ENCODE measurements at regions of chr3 and their contacts with region 1.

Region 1: DNA sequence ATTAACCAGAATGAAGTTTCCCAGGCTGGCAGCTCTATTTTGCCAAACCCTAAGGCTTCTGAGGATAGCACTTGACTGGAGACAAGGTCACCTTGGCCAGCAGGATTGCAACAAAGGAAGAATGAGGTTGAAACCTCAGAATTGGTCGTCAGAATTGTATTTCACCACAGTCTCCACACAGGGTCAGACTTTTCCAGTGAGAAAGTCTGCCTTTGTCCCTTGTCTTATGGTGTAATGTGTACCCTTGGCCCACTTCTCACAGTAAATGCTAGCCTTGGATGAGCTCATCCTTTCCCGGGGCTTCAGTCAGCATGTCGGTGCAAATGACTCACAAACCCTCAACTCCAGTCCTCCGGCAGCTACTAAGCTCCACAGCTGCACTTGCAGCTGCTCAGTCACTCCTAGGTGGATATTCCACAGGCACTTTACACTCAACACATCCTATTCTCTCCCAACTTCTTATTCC is 19.7 kb downstream of the SSR3 start:
- DNase-seq: peak; percentile 76
- H3K4me3 Mint-ChIP-seq: peak overlapping the region; percentile 3
- H3K27ac Mint-ChIP-seq: peak overlapping the region; percentile 35
- H3K4me1 Mint-ChIP-seq: peaks cover 22% of the 10 kb centered on the region
- H3K27me3 Mint-ChIP-seq: no peaks in the 10 kb centered on the region
- CTCF ChIP-seq: no peak

Region 2: GRCh38 chr3:155805204-155805801 is 729.9 kb before region 1 on chr3:
- CTCF ChIA-PET with region 1: no interaction called
- intact Hi-C with region 1: no loop called
- DNase-seq: peak; percentile 69
- H3K4me3 Mint-ChIP-seq: peak overlapping the region; percentile 93
- H3K27ac Mint-ChIP-seq: peak overlapping the region; percentile 78
- H3K4me1 Mint-ChIP-seq: peaks cover 14% of the 10 kb centered on the region
- H3K27me3 Mint-ChIP-seq: peaks cover 7% of the 10 kb centered on the region
- CTCF ChIP-seq: no peak

Region 3: DNA sequence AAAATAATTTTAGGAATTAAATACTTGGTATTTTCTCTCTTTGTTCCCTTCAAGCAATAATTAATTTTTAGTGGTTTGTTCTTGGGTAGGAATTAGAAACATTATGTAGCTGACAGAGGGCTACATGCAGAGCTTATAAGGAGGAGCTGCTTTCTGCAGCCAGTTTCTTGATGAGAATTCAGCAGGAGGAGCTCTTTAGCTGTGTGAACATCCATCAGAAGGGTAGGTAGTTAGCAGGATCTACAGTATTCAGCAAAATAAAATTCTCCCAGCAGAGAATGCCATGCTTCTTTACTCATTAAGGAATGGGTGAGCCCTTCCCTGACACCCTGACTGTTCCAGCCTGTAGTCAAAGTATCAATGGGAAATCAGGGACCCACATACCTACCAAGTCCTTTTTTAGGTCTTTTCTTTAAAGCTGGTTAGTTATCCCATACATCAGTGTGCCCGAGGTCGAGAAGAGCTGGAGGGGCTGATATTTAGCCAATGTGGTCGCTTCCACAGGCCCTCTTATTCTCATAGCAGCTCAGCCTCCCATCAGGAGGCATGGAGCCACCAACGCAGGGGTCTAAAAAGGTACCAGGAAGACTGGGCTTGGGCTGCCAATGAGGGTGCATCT is 360.9 kb before region 1 on chr3:
- CTCF ChIA-PET with region 1: no interaction called
- intact Hi-C with region 1: no loop called
- DNase-seq: no peak
- H3K4me3 Mint-ChIP-seq: no peak overlapping the region
- H3K27ac Mint-ChIP-seq: no peak overlapping the region
- H3K4me1 Mint-ChIP-seq: no peaks in the 10 kb centered on the region
- H3K27me3 Mint-ChIP-seq: peaks cover 66% of the 10 kb centered on the region
- CTCF ChIP-seq: peak; percentile 9

Region 4: DNA sequence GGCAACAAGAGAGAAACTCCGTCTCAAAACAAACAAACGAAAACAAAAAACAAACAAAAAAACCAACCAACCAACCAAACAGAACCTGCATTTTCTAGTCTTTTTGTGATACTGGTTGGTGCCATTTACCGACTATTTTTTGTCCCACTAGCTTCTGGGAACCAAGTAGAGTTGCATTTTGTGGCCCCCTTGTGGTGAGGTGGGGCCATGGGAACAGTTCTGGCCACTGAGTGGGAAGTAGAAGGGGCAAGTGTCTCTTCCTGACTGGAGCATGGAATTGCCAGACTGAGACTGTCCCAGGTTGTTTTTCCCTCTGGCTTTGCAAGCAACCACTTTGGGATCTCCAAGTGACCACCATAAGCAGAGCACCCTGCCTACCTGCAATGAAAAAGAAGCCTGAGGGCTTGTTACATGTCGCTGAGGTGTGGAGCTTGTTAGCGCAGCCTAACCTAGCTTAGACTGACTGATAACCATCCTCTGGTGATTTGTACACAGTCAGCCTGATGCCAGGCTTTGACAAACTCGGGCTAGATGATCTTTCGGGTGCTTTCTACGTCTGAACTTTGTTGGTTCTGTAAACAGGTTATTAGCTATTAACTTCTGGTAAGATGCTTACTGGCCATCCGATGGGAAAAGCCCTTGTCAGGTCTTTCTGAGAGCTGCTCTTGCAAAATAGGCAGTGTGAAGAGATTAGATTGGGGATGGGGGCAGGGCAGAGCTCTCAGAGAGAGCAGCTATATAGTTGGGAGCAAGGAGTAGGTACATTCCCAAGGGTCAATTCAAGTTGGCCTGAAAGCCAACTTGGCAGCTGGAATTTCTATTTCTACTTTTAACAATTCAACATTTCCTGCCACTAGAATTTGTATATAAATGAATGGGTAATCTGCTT is 152.5 kb before region 1 on chr3:
- CTCF ChIA-PET with region 1: no interaction called
- intact Hi-C with region 1: no loop called
- DNase-seq: peak; percentile 82
- H3K4me3 Mint-ChIP-seq: no peak overlapping the region
- H3K27ac Mint-ChIP-seq: no peak overlapping the region
- H3K4me1 Mint-ChIP-seq: no peaks in the 10 kb centered on the region
- H3K27me3 Mint-ChIP-seq: peaks cover 80% of the 10 kb centered on the region
- CTCF ChIP-seq: peak; percentile 94

Region 5: DNA sequence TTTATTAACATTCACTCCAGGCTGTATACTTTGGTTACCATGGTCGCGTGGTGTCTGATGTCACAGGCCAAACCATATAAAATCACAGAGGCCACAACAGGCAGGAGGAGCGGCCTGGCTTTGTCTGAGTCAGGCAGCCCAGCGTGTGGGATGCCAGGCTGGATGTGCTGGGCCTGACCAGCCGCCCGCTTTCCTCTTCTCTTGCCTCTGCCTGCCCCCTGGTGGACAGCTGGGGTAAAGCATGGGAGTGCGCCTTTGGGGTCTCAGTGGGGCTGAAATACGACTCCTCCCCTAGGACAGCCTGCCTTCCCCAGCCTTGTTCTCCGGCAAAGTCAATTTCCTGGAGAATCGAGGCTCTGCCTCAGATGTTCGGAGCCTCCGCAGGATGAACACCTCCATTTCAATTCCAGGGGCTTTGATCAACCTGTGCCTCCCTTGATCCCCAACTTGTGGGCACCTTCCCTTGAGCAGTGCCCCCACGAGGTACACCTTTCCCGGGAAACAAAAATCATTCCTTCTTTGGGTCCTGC is 546.6 kb after region 1 on chr3:
- CTCF ChIA-PET with region 1: interaction called, 6 read pairs
- intact Hi-C with region 1: loop called (anchors 2 kb)
- DNase-seq: peak; percentile 99
- H3K4me3 Mint-ChIP-seq: no peak overlapping the region
- H3K27ac Mint-ChIP-seq: peak overlapping the region; percentile 94
- H3K4me1 Mint-ChIP-seq: peaks cover 46% of the 10 kb centered on the region
- H3K27me3 Mint-ChIP-seq: no peaks in the 10 kb centered on the region
- CTCF ChIP-seq: peak; percentile 100

Measured in Calu3 (cell line).